Sciatic nerve (tissue), 2 donors: ENCODE measurements at regions of chr1 and their contacts with region 1.

Region 1: GRCh38 chr1:161367684-161368400 is at the start of gene CFAP126:
- DNase-seq: peak; percentile 70
- ATAC-seq: peak; percentile 99
- total RNA-seq, gene CFAP126: 0.49 TPM

Region 2: GRCh38 chr1:161314201-161314981 is 53.5 kb before region 1 on chr1 and contains the start of gene SDHC:
- intact Hi-C with region 1: loop called (anchors 10 kb)
- DNase-seq: peak; percentile 95
- ATAC-seq: peak; percentile 99
- total RNA-seq, gene SDHC: 124 TPM

Region 3: GRCh38 chr1:161399257-161399998 is 31.6 kb after region 1 on chr1:
- intact Hi-C with region 1: no loop called
- DNase-seq: peak; percentile 94
- ATAC-seq: peak; percentile 95

Region 4: DNA sequence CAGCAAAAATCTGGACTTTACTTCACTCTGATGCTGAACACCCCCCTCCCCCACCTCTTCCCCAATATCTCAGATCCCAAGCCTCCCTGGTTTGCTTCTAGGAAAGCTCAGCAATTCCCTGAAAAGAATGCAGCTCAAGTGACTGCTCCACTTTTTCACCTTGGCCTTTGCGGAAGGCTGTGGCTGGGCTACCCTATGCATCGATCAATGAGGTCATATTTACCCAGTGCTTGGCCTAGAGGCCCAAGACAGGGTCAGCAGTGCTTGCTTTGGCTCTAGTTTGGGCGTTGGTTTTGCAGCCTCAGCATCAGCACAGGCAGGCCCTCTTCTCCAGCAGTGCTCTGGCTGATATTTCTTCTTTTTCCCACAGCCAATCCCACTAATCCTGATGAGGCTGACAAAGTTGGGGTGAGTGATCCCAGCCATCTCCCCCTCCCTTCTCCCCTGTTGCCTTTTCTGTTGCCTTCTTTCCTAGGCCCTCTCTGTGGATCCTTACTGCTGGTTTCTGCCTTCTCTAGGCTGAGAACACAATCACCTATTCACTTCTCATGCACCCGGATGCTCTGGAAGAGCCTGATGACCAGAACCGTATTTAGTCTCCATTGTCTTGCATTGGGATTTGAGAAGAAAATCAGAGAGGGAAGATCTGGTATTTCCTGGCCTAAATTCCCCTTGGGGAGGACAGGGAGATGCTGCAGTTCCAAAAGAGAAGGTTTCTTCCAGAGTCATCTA is 309.3 kb after region 1 on chr1:
- intact Hi-C with region 1: no loop called
- DNase-seq: no peak
- ATAC-seq: peak; percentile 51